Motor neuron (in vitro differentiated cells): ENCODE measurements at regions of chr1 and their contacts with region 1.

Region 1: GRCh38 chr1:87292684-87293493 is 35.8 kb upstream of the LMO4 start:
- ATAC-seq: peak; percentile 63 to 88 (median 75)
- H3K4me3 ChIP-seq: no peak overlapping the region
- H3K27ac ChIP-seq: no peak overlapping the region
- H3K4me1 ChIP-seq: peaks cover 0 to 23% of the 10 kb centered on the region in 2 donors

Region 2: GRCh38 chr1:86875722-86876121 is 417.2 kb before region 1 on chr1:
- in situ Hi-C with region 1: no loop called
- ATAC-seq: peak in 2 of 8 experiments; percentile 24 to 50
- H3K4me3 ChIP-seq: no peak overlapping the region
- H3K27ac ChIP-seq: no peak overlapping the region
- H3K4me1 ChIP-seq: no peaks in the 10 kb centered on the region

Region 3: DNA sequence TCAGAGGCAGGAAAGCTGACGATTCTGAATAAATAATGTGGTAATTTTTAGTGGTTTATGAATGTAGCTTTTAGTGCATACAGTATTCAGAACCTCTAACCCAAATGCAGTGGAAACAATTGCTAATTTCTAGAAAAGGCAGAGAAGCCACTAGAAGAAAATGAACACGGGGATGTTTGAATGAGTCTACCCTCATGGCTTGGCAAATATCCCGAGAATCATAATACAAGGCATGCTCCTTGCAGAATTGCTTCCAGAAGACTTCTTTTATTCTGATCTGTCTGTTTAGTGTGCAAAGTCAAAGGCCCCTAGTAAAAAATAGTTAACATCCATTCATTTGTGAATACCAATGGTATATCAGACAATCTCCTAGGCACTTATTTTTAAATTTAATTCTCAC is 282.6 kb after region 1 on chr1:
- in situ Hi-C with region 1: no loop called
- ATAC-seq: peak in 2 of 8 experiments; percentile 6 to 37
- H3K4me3 ChIP-seq: no peak overlapping the region
- H3K27ac ChIP-seq: no peak overlapping the region
- H3K4me1 ChIP-seq: no peaks in the 10 kb centered on the region

Region 4: DNA sequence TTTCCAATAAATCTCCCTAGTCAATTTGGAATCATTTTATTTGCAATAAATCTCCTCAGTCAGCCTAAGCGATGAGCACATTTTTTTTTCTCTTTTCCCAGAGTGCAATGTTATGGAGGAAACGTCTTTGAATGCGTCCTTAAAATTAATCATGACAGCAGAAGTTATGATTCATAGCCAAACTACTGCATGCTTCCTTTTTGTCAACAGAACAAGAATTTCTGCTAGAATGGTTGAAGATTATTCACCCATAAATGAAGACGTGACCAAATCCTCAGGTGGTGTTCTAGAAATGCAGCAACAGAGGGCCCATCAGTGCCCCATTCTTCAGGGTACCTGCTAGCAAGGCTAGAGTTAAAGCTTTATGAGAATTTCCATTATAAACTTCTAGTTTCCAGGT is 983.3 kb after region 1 on chr1:
- in situ Hi-C with region 1: loop called in 1 of 9 experiments (anchors 25 kb)
- ATAC-seq: peak in 3 of 8 experiments; percentile 48 to 59 (median 53)
- H3K4me3 ChIP-seq: no peak overlapping the region
- H3K27ac ChIP-seq: no peak overlapping the region
- H3K4me1 ChIP-seq: no peaks in the 10 kb centered on the region

Region 5: GRCh38 chr1:88302843-88303486 is 1010.1 kb after region 1 on chr1:
- in situ Hi-C with region 1: loop called in 3 of 9 experiments (anchors 25 kb)
- ATAC-seq: peak in 4 of 8 experiments; percentile 39 to 54 (median 45)
- H3K4me3 ChIP-seq: no peak overlapping the region
- H3K27ac ChIP-seq: no peak overlapping the region
- H3K4me1 ChIP-seq: no peaks in the 10 kb centered on the region